Panc1 (cell line): ENCODE measurements at regions of chr16 and their contacts with region 1.

Region 1: DNA sequence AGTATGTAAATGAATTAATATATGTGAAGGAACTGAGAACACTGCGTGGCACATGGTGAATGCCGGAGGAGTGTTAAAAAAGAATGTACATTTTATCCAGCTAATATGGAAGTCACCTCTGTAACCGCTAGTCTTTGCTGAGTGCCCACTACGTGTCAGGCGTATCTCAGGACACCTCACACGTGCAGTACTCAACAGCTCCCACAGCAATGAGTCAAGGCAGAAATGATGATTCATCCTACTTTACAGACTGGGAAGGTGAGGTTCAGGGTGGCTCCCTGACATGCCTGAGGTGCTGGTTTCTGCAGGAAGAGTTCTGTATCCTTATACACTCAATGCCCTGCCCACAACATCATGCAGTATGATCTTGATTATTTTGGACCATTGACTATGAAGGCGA is 487.0 kb downstream of the HAPSTR1 start:
- DNase-seq: no peak
- ATAC-seq: no peak
- H3K4me3 ChIP-seq: no peak overlapping the region
- H3K27ac ChIP-seq: no peak overlapping the region
- H3K4me1 ChIP-seq: no peaks in the 10 kb centered on the region
- H3K27me3 ChIP-seq: no peaks in the 10 kb centered on the region
- CTCF ChIP-seq: no peak

Region 2: DNA sequence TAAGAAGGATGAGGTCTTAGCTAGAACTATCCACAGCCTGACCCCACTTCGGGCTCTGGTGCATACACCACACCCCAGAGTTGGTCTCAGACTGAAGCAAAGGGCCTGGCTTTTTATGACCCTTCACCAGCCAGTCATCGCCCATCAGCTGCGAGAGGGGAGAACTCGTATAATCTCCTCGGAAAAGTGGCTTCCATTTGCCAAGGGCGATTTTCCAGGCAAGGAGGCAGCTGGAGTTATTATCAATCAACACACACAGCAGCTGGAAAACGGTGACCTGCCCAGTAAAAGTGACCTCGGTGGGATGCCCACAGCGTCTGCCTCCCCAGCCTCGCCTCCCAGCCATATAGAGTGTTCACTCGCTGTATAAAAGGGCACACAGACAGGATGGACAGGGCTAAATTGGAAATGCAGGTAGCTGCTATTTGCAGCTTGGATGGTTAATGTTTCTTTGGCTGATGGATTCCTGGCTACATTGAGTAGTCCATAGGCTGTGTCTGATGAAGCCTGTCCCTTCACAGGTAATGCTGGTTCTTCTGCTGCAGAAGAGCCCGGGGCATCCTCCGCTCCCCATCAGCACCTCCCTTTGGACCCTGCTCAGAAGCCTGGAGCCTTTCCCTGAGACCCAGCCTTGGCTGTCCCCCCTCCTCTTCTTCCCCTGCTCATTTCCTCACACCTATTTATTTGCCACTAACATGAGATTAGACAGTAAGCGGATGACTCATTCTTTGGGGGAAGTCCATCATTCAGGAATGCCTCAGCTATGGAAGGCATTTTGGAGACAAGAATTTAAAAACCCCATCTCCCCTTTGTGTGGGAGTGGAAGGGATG is 826.8 kb before region 1 on chr16:
- CTCF ChIA-PET with region 1: interaction called, 11 read pairs
- POLR2A ChIA-PET with region 1: no interaction called
- in situ Hi-C with region 1: no loop called
- intact Hi-C with region 1: no loop called
- DNase-seq: no peak
- ATAC-seq: peak; percentile 66
- H3K4me3 ChIP-seq: no peak overlapping the region
- H3K27ac ChIP-seq: no peak overlapping the region
- H3K4me1 ChIP-seq: no peaks in the 10 kb centered on the region; the same call in 1 of the 2 replicates
- H3K27me3 ChIP-seq: no peaks in the 10 kb centered on the region
- CTCF ChIP-seq: no peak

Region 3: GRCh38 chr16:9813665-9814064 is 235.2 kb after region 1 on chr16:
- CTCF ChIA-PET with region 1: no interaction called
- POLR2A ChIA-PET with region 1: interaction called, 14 read pairs
- in situ Hi-C with region 1: no loop called
- intact Hi-C with region 1: no loop called
- DNase-seq: no peak
- ATAC-seq: no peak
- H3K4me3 ChIP-seq: no peak overlapping the region
- H3K27ac ChIP-seq: no peak overlapping the region
- H3K4me1 ChIP-seq: no peaks in the 10 kb centered on the region
- H3K27me3 ChIP-seq: no peaks in the 10 kb centered on the region
- CTCF ChIP-seq: no peak

Region 4: DNA sequence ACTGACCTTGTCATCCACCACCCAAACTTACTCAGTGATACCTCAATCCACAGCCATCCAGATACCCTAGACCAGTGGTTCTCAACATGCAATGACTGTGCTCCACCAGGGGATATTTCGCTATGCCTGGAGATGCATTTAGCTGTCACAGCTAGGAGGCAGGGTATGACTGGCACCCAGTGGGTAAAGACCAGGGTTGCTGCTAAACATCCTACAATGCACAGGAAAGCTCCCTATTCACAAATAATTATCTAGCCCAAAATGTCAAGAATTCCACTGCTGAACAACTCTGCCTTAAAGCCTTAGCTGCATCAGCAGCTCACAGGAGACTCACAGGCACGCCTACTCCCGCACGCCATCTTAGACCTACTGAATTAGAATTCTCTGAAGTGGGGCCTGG is 391.1 kb after region 1 on chr16:
- CTCF ChIA-PET with region 1: no interaction called
- POLR2A ChIA-PET with region 1: interaction called, 11 read pairs
- in situ Hi-C with region 1: no loop called
- intact Hi-C with region 1: no loop called
- DNase-seq: no peak
- ATAC-seq: no peak
- H3K4me3 ChIP-seq: no peak overlapping the region
- H3K27ac ChIP-seq: no peak overlapping the region
- H3K4me1 ChIP-seq: no peaks in the 10 kb centered on the region
- H3K27me3 ChIP-seq: no peaks in the 10 kb centered on the region
- CTCF ChIP-seq: peak; percentile 33